Naive thymus-derived CD8-positive, alpha-beta T cell (primary cell): ENCODE measurements at regions of chr1 and their contacts with region 1.

Region 1: GRCh38 chr1:93345633-93346420 is at the start of gene DR1:
- DNase-seq: peak; percentile 82 to 95 (median 89)
- ATAC-seq: peak; percentile 78 to 83
- H3K4me3 Mint-ChIP-seq: peak within 1 kb of the TSS; percentile 92 to 100 (median 98)
- H3K27ac Mint-ChIP-seq: peak within 1 kb of the TSS; percentile 97 to 99 (median 98)
- H3K4me1 Mint-ChIP-seq: peaks cover 22 to 57% (median 41%) of the 10 kb centered on the region in 4 donors
- H3K27me3 Mint-ChIP-seq: peaks cover 0 to 2% (median 0%) of the 10 kb centered on the region in 5 donors
- polyA plus RNA-seq, gene DR1: 54.3 to 68.3 (median 66.0) TPM

Region 2: DNA sequence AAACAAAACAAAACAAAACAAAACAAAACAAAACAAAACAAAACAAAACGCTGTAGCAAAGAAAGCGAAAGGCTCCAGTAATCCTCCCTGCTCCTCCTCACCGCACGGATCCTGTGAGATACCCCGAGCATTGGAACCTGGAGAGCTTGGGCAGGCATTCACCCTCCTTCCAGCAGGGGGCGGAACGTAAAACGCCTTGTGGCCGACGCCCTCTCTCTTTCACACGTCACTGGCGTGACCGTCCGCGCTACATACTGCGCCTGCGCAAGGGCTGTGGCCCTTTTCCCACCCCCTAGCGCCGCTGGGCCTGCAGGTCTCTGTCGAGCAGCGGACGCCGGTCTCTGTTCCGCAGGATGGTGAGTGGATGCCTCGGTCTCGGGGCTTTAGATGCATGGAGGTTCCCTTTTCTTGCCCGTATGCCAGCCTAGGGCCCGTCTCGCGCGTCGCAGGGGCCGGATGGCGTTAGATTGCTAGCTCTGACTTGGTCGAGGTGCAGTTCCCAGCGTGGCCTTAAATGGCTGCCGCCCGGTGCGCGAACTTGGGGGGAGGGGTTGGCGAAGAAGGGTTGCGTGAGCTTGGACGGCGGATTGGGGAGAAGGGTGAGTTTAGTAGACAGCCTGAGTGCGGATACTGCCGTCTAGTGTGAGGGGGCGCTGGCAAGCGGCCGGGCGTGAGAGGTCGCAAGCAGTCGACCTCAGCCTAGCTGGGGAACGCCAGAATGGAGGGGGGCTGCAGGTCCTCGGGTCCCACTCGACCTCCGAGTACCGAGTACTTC is 513.9 kb before region 1 on chr1 and contains the start of gene RPL5:
- POLR2A ChIA-PET with region 1: interaction called, 10 read pairs
- DNase-seq: peak; percentile 91 to 100 (median 98)
- ATAC-seq: peak; percentile 83 to 85
- H3K4me3 Mint-ChIP-seq: peak within 1 kb of the TSS; percentile 94 to 100 (median 98)
- H3K27ac Mint-ChIP-seq: peak within 1 kb of the TSS; percentile 96 to 100 (median 98)
- H3K4me1 Mint-ChIP-seq: peaks cover 18 to 53% (median 49%) of the 10 kb centered on the region in 4 donors
- H3K27me3 Mint-ChIP-seq: no peaks in the 10 kb centered on the region
- polyA plus RNA-seq, gene RPL5: 3,250 to 3,560 (median 3,276) TPM

Region 3: GRCh38 chr1:93556291-93556690 is 210.5 kb after region 1 on chr1:
- POLR2A ChIA-PET with region 1: no interaction called
- DNase-seq: no peak
- ATAC-seq: no peak
- H3K4me3 Mint-ChIP-seq: no peak overlapping the region
- H3K27ac Mint-ChIP-seq: no peak overlapping the region
- H3K4me1 Mint-ChIP-seq: peaks cover 6 to 26% (median 15%) of the 10 kb centered on the region in 4 donors
- H3K27me3 Mint-ChIP-seq: peaks cover 1 to 9% (median 5%) of the 10 kb centered on the region in 5 donors